Right ventricle myocardium inferior (tissue), 1 donor: ENCODE measurements at regions of chr1 and their contacts with region 1.

Region 1: GRCh38 chr1:95467036-95467435 is 233.0 kb downstream of the RWDD3 start:
- DNase-seq: no peak
- ATAC-seq: no peak

Region 2: GRCh38 chr1:95309031-95309471 is 158.0 kb before region 1 on chr1:
- intact Hi-C with region 1: loop called (anchors 5 kb)
- DNase-seq: no peak
- ATAC-seq: no peak

Region 3: GRCh38 chr1:95451054-95451453 is 16.0 kb before region 1 on chr1:
- intact Hi-C with region 1: no loop called
- DNase-seq: no peak
- ATAC-seq: no peak